PC-9 (cell line): ENCODE measurements at regions of chr11 and their contacts with region 1.

Region 1: GRCh38 chr11:9137293-9138132 is 46.1 kb upstream of the SCUBE2 start:
- DNase-seq: peak; percentile 56 to 71
- H3K4me3 ChIP-seq: no peak overlapping the region
- H3K27ac ChIP-seq: no peak overlapping the region
- H3K4me1 ChIP-seq: peaks cover 40% of the 10 kb centered on the region
- H3K27me3 ChIP-seq: no peaks in the 10 kb centered on the region
- CTCF ChIP-seq: peak; percentile 92

Region 2: GRCh38 chr11:9015677-9016076 is 121.8 kb before region 1 on chr11:
- CTCF ChIA-PET with region 1: interaction called, 10 read pairs
- POLR2A ChIA-PET with region 1: no interaction called
- intact Hi-C with region 1: loop called (anchors 5 kb)
- DNase-seq: peak; percentile 29 to 60
- H3K4me3 ChIP-seq: no peak overlapping the region
- H3K27ac ChIP-seq: no peak overlapping the region
- H3K4me1 ChIP-seq: no peaks in the 10 kb centered on the region
- H3K27me3 ChIP-seq: no peaks in the 10 kb centered on the region
- CTCF ChIP-seq: peak; percentile 72

Region 3: GRCh38 chr11:9825315-9825714 is 687.8 kb after region 1 on chr11:
- CTCF ChIA-PET with region 1: interaction called, 13 read pairs
- POLR2A ChIA-PET with region 1: no interaction called
- intact Hi-C with region 1: no loop called
- DNase-seq: no peak
- H3K4me3 ChIP-seq: no peak overlapping the region
- H3K27ac ChIP-seq: no peak overlapping the region
- H3K4me1 ChIP-seq: no peaks in the 10 kb centered on the region
- H3K27me3 ChIP-seq: no peaks in the 10 kb centered on the region
- CTCF ChIP-seq: no peak